Colonic mucosa (tissue), 4 donors: ENCODE measurements at regions of chr3 and their contacts with region 1.

Region 1: GRCh38 chr3:170171563-170171962 is 10.0 kb downstream of the PHC3 start:
- DNase-seq: no peak
- H3K4me3 ChIP-seq: no peak overlapping the region
- H3K27ac ChIP-seq: no peak overlapping the region
- H3K4me1 ChIP-seq: no peaks in the 10 kb centered on the region
- H3K27me3 ChIP-seq: no peaks in the 10 kb centered on the region
- CTCF ChIP-seq: no peak

Region 2: DNA sequence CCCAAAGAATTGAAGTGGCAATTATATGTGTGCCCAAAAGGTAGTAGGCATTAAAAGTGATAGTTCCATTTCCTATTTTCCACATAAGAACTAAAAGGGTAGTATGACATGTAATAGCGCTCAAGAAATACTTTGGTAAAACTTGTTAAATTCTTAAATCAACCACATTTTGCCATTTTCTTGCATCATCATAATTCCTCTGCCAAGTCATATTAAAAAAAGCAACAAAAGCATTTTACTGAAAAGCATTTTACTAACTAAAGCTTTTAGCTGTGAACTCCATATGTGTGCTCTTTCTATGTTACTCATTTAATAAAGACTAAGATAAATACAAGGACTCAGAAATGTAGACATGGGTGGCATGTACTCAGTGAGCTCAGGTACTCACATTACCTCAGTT is 63.6 kb before region 1 on chr3:
- intact Hi-C with region 1: loop called (anchors 10 kb)
- DNase-seq: no peak
- H3K4me3 ChIP-seq: no peak overlapping the region
- H3K27ac ChIP-seq: no peak overlapping the region
- H3K4me1 ChIP-seq: no peaks in the 10 kb centered on the region
- H3K27me3 ChIP-seq: no peaks in the 10 kb centered on the region
- CTCF ChIP-seq: no peak